ENCODE measurements at regions of chr7 and their contacts with region 1.

Region 1: GRCh38 chr7:3482147-3482964 is 181.3 kb downstream of the SDK1 start:
- DNase-seq: peak; percentile 42
- H3K4me3 ChIP-seq: no peak overlapping the region
- H3K27ac ChIP-seq: no peak overlapping the region
- H3K4me1 ChIP-seq: no peaks in the 10 kb centered on the region
- H3K27me3 ChIP-seq: no peaks in the 10 kb centered on the region
- CTCF ChIP-seq: peak; percentile 33 to 37

Region 2: DNA sequence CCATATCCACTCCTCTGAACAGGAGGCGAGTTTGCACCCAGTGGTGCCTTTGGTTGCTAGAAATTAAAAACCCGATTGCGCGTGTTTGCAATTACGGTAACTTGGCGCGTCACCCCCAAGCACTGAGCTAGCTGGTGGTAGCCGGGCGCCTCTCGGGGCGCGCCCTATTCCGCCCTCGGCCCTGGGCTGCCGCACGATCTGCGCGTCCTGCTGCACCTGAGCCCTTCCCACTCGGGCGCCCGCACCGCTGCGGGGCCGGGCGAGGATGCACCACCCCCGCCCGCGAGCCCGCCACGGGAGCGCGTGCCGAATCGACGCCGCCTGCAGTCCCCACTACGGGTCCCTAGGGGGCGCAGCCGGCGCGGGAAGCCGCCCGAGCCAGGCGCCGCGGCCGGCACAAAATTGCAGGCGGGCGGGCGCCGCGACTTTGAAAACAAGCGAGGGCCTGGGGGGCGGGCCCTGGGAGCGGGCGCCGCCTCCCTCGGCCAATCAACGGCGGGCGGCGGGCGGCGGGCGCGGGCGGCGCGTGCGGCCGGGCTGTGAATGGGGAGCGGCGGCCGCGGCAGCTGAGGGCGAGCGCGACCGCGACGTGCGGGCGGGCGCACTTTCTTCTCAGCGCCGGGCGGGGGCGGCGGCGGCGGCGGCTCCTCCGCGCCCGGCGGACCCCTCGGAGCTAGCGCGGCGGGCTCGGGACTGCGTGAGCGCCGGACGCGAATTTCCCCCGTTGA is 181.5 kb before region 1 on chr7 and contains the start of gene SDK1:
- CTCF ChIA-PET with region 1: no interaction called
- dilution Hi-C with region 1: no loop called
- in situ Hi-C with region 1: no loop called
- intact Hi-C with region 1: loop called (anchors 10 kb)
- DNase-seq: peak; percentile 80
- H3K4me3 ChIP-seq: peak within 1 kb of the TSS in 2 of 3 experiments; percentile 27 to 42
- H3K27ac ChIP-seq: no peak within 1 kb of the TSS
- H3K4me1 ChIP-seq: peaks cover 6% of the 10 kb centered on the region
- H3K27me3 ChIP-seq: peaks cover 11% of the 10 kb centered on the region
- CTCF ChIP-seq: peak; percentile 45 to 74
- total RNA-seq, gene SDK1: 4.0 to 24.5 TPM

Region 3: DNA sequence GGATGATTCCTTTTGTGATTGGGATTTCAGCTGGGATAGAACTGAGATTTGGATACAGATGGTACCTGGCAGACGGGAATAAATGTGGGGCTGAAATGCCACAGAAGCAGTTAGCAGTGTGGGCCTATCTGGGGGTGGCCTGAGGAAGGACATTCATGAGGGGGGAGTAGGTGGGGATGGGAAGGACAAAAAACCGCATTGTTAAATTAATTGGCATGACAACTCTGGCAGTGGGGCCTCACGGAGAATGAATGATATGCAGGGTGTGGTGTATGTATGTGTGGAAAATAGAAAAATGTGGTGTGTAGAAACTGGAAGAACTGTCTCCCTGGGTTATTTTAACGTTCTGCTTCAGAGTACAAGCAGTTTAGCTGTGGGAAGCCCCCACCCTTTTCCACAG is 163.5 kb before region 1 on chr7:
- CTCF ChIA-PET with region 1: no interaction called
- dilution Hi-C with region 1: no loop called
- in situ Hi-C with region 1: no loop called
- intact Hi-C with region 1: no loop called
- DNase-seq: no peak
- H3K4me3 ChIP-seq: no peak overlapping the region
- H3K27ac ChIP-seq: no peak overlapping the region
- H3K4me1 ChIP-seq: no peaks in the 10 kb centered on the region
- H3K27me3 ChIP-seq: no peaks in the 10 kb centered on the region
- CTCF ChIP-seq: no peak

Region 4: DNA sequence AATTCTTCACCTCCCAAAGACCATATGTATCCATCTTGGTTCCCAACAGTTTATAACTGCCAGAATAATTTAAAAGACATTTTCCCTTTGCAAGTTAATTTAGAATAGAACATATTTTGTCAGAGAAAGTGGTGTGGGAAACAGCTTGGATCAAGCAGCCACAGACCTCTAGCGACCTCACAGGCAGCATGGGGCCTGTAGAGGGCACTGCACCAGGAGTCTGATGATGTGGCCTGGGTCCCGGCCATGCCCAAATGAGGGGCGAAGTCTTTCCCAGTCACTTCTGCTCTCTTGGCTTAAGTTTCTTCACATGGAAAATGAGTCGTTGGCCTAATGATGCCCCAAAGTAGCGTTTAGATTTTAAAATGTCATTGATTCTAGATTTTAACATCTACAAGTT is 61.8 kb after region 1 on chr7:
- CTCF ChIA-PET with region 1: no interaction called
- dilution Hi-C with region 1: loop called (anchors 5 kb)
- in situ Hi-C with region 1: no loop called
- intact Hi-C with region 1: no loop called
- DNase-seq: no peak
- H3K4me3 ChIP-seq: no peak overlapping the region
- H3K27ac ChIP-seq: no peak overlapping the region
- H3K4me1 ChIP-seq: no peaks in the 10 kb centered on the region
- H3K27me3 ChIP-seq: no peaks in the 10 kb centered on the region
- CTCF ChIP-seq: no peak

Region 5: DNA sequence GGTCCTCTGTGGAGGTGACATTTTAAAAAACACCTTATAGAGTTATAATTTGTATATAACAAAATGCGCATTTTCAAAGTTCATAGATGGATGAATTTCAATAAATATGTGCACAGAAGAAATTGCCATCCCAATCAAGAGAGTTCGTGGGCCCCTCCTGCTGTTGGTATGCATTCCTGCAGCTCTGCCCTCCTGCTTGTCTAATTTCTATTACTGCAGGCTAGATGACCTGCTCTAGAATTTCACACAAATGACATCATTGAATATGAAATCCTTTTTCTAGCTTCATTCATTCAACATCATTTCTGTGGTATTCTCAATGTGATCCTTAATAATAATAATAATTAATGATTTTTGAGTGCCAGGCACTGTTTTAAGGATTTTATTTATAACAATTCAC is 166.9 kb after region 1 on chr7:
- CTCF ChIA-PET with region 1: no interaction called
- dilution Hi-C with region 1: no loop called
- in situ Hi-C with region 1: no loop called
- intact Hi-C with region 1: loop called (anchors 1 kb)
- DNase-seq: no peak
- H3K4me3 ChIP-seq: no peak overlapping the region
- H3K27ac ChIP-seq: no peak overlapping the region
- H3K4me1 ChIP-seq: no peaks in the 10 kb centered on the region
- H3K27me3 ChIP-seq: no peaks in the 10 kb centered on the region
- CTCF ChIP-seq: peak in 1 of 2 donors; percentile 6

Region 6: DNA sequence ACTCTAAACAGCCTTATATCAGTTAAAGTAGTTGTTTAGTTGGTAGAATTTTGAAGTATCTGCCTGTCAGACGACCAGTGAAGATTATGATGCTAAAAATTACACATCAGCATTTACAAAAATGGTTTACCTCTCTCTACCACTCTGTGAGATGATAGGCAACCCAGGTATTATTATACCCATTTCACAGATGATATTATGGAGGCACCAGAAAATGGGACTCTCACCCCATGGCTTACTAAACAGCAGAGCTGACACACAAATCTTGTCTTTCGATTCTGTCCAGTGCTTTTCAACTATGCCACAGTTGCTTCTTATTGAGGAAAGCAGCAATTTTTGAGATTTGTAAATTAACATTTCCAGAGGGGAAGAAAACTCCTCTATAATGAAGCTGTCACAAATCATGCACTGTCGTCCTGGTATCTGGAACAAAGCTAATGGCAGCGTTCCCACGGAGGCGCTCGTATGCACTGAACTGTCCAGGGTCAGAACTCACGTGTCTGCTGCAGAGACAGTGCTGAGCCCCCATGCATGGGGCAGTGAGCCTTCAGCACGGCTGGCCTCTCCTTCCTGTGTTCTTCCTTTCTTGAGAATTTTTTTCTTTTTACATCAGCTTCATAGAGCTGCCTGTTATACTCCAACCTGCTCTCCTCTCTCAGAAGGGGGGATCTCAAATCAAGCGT is 199.8 kb after region 1 on chr7:
- CTCF ChIA-PET with region 1: no interaction called
- dilution Hi-C with region 1: no loop called
- in situ Hi-C with region 1: no loop called
- intact Hi-C with region 1: no loop called
- DNase-seq: no peak
- H3K4me3 ChIP-seq: no peak overlapping the region
- H3K27ac ChIP-seq: no peak overlapping the region
- H3K4me1 ChIP-seq: no peaks in the 10 kb centered on the region
- H3K27me3 ChIP-seq: no peaks in the 10 kb centered on the region
- CTCF ChIP-seq: no peak

Region 7: GRCh38 chr7:3897438-3898385 is 415.4 kb after region 1 on chr7:
- CTCF ChIA-PET with region 1: no interaction called
- dilution Hi-C with region 1: no loop called
- in situ Hi-C with region 1: no loop called
- intact Hi-C with region 1: loop called (anchors 5 kb)
- DNase-seq: peak; percentile 19
- H3K4me3 ChIP-seq: no peak overlapping the region
- H3K27ac ChIP-seq: no peak overlapping the region
- H3K4me1 ChIP-seq: no peaks in the 10 kb centered on the region
- H3K27me3 ChIP-seq: no peaks in the 10 kb centered on the region
- CTCF ChIP-seq: peak; percentile 62 to 63

Region 8: GRCh38 chr7:3998060-3998459 is 515.7 kb after region 1 on chr7:
- CTCF ChIA-PET with region 1: no interaction called
- dilution Hi-C with region 1: no loop called
- in situ Hi-C with region 1: no loop called
- intact Hi-C with region 1: no loop called
- DNase-seq: no peak
- H3K4me3 ChIP-seq: no peak overlapping the region
- H3K27ac ChIP-seq: no peak overlapping the region
- H3K4me1 ChIP-seq: no peaks in the 10 kb centered on the region
- H3K27me3 ChIP-seq: no peaks in the 10 kb centered on the region
- CTCF ChIP-seq: no peak

Region 9: DNA sequence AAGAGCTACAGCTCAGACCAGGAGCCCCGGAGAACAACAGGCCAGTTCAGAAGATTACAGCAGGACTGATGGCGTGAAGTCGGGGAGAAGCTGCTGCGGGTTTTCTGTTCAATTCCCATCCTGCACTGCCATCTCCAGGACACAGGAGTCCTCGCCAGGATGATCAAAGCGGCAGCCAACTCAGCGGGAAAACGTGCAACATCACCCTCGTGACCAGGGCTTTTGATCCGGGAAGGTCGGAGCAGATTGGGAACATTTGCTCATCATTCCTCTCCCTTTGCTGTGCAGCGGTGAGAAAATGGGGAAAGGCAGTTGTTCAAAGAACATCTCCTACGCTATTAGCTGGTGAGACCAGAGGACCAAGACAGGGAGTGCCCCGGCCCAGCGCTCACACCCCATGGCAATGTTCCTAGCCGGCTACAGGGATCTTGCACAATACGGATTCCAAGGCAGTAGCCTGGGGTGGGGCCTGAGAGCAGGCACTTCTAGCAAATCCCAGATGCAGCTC is 1149.4 kb after region 1 on chr7:
- CTCF ChIA-PET with region 1: no interaction called
- dilution Hi-C with region 1: no loop called
- in situ Hi-C with region 1: no loop called
- intact Hi-C with region 1: loop called (anchors 5 kb)
- DNase-seq: peak; percentile 87
- H3K4me3 ChIP-seq: peak overlapping the region in 2 of 3 experiments; percentile 19 to 36
- H3K27ac ChIP-seq: no peak overlapping the region
- H3K4me1 ChIP-seq: peaks cover 12% of the 10 kb centered on the region
- H3K27me3 ChIP-seq: no peaks in the 10 kb centered on the region
- CTCF ChIP-seq: peak; percentile 74 to 81